WTC11 (cell line): ENCODE measurements at regions of chr16 and their contacts with region 1.

Region 1: GRCh38 chr16:67883872-67884261 is 818 bp upstream of the NRN1L start:
- DNase-seq: peak; percentile 88
- ATAC-seq: peak; percentile 60
- H3K4me3 Mint-ChIP-seq: no peak overlapping the region
- H3K27ac Mint-ChIP-seq: no peak overlapping the region
- H3K4me1 Mint-ChIP-seq: peaks cover 23% of the 10 kb centered on the region
- H3K27me3 Mint-ChIP-seq: no peaks in the 10 kb centered on the region
- CTCF ChIP-seq: peak; percentile 90

Region 2: DNA sequence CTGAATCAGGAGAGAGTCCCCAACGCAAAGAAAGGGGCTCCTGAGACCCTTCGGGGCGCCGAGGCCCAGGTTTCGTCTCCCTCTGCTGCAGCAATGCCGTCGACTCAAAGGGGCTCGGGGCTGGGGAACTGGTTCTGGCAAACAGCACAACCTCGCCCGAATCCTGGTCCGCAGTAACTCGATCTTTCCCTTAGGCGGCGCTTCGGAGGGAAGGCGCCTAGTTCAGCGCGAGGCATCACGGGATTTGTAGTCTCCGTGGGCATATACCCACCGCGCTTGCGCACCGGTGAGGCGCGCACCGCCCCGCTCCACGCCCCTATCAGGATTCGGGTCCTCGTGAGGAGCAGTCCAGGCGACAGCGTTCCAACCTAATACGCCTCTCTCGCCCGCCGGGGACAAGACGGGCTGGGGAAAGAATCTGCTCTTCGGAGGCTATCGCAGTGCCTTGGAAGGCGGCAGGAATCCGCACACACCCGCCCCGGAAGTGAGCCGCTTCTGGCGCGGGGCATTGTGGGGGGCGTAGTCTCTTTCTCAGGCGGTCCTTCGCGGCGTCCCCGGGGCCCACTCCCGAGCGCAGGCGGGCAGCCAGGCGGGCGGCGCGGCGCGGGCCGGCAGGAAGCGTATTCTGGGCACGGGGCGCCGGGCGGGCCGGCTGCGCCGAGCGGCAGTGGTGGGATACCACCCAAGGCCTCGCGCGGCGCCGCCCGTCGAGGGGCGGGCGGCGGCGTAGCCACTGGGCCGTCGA is 41.9 kb before region 1 on chr16 and contains the start of gene THAP11:
- CTCF ChIA-PET with region 1: interaction called, 17 read pairs
- POLR2A ChIA-PET with region 1: interaction called, 5 read pairs
- DNase-seq: peak; percentile 98
- ATAC-seq: peak; percentile 51
- H3K4me3 Mint-ChIP-seq: peak within 1 kb of the TSS; percentile 94
- H3K27ac Mint-ChIP-seq: peak within 1 kb of the TSS; percentile 97
- H3K4me1 Mint-ChIP-seq: peaks cover 40% of the 10 kb centered on the region
- H3K27me3 Mint-ChIP-seq: no peaks in the 10 kb centered on the region
- CTCF ChIP-seq: peak; percentile 69
- total RNA-seq, gene THAP11: 46.5 to 49.0 TPM (median 47.4 TPM) in 3 replicates

Region 3: GRCh38 chr16:67872786-67873537 is 10.9 kb before region 1 on chr16 and contains the start of gene EDC4:
- CTCF ChIA-PET with region 1: interaction called, 29 read pairs
- POLR2A ChIA-PET with region 1: no interaction called
- DNase-seq: peak; percentile 76
- ATAC-seq: peak; percentile 74
- H3K4me3 Mint-ChIP-seq: peak within 1 kb of the TSS; percentile 92
- H3K27ac Mint-ChIP-seq: peak within 1 kb of the TSS; percentile 90
- H3K4me1 Mint-ChIP-seq: peaks cover 15% of the 10 kb centered on the region
- H3K27me3 Mint-ChIP-seq: no peaks in the 10 kb centered on the region
- CTCF ChIP-seq: no peak
- total RNA-seq, gene EDC4: 72.6 to 83.7 TPM (median 74.1 TPM) in 3 replicates

Region 4: GRCh38 chr16:67928561-67929364 is 44.9 kb after region 1 on chr16:
- CTCF ChIA-PET with region 1: interaction called, 144 read pairs
- POLR2A ChIA-PET with region 1: interaction called, 30 read pairs
- DNase-seq: peak; percentile 88
- ATAC-seq: peak; percentile 81
- H3K4me3 Mint-ChIP-seq: no peak overlapping the region
- H3K27ac Mint-ChIP-seq: no peak overlapping the region
- H3K4me1 Mint-ChIP-seq: peaks cover 15% of the 10 kb centered on the region
- H3K27me3 Mint-ChIP-seq: no peaks in the 10 kb centered on the region
- CTCF ChIP-seq: peak; percentile 67

Region 5: GRCh38 chr16:68040507-68041288 is 156.8 kb after region 1 on chr16:
- CTCF ChIA-PET with region 1: interaction called, 15 read pairs
- POLR2A ChIA-PET with region 1: no interaction called
- DNase-seq: peak; percentile 93
- ATAC-seq: peak; percentile 100
- H3K4me3 Mint-ChIP-seq: no peak overlapping the region
- H3K27ac Mint-ChIP-seq: peak overlapping the region; percentile 86
- H3K4me1 Mint-ChIP-seq: no peaks in the 10 kb centered on the region
- H3K27me3 Mint-ChIP-seq: no peaks in the 10 kb centered on the region
- CTCF ChIP-seq: peak; percentile 88